ENCODE measurements at regions of chr6 and their contacts with region 1.

Region 1: DNA sequence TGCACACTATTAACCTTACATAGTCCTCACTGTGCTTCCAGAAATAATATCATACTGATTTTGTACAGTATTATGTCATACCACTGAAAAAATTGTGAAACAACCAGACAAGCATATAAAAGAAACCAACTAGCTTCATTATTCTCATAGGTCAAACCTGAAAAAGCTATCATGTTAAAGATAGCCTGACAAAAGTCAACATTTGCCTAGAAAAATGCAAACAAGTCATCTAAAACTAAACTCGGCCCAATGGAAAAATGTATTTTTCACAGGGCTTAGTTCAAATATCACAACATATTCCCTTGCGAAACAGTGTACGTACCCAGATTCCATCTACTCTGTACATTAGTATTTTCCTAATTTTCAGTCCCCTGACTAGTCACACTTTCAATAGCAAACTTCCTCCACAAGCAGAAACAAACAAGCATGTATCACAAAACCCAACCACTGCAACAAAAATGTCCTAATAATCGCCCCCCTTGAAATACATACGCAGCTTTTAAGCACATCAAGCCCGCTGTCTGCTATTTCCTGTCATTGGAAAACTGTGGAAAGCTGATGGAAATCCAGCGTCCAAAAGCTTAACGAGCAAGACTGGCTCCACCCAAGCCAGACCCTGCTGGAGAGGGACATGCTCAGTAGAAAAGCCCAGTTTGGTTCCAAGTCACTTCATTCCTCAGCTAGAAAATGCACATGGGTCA is 93.1 kb downstream of the EPB41L2 start:
- DNase-seq: peak; percentile 67
- ATAC-seq: peak; percentile 53
- H3K4me3 ChIP-seq: peak overlapping the region; percentile 37
- H3K27ac ChIP-seq: peak overlapping the region; percentile 84
- H3K4me1 ChIP-seq: peaks cover 24% of the 10 kb centered on the region
- H3K27me3 ChIP-seq: no peaks in the 10 kb centered on the region
- CTCF ChIP-seq: no peak
- POLR2A ChIP-seq: no peak
- RAD21 ChIP-seq: no peak

Region 2: DNA sequence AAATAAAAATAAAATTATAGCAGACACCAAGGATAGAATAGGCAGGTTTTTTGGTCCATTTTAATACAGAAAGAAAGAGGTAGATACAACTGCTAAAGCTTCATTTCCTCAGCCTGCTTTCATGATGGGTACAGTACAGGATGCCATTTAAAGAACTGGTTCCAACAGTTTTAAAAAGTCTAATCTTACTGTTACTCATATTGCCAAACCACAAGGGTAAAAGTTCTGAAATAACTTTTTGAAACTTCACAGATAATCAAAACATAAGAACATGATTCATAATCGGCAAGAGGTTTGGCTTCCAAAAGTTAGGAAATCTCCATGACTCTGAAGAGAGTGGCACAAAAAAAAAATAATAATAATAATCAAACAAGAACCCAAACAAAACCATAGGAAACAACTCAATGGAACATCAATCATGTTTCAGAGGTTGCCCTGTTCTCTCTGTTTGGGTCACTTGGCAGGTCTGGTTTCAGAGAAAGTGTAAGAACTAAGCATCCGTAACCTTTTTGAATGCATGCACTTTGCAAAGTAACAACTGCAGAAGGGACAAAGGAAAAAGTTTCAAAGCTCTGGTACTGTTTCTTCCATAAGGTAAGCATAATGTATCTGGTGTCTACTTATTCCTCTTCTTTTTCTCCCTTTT is 63.1 kb before region 1 on chr6:
- CTCF ChIA-PET with region 1: no interaction called
- POLR2A ChIA-PET with region 1: interaction called, 3 read pairs
- dilution Hi-C with region 1: no loop called
- in situ Hi-C with region 1: no loop called
- intact Hi-C with region 1: loop called (anchors 5 kb)
- DNase-seq: peak; percentile 88
- ATAC-seq: peak; percentile 90
- H3K4me3 ChIP-seq: no peak overlapping the region
- H3K27ac ChIP-seq: peak overlapping the region; percentile 41; the same call in 1 of the 2 replicates
- H3K4me1 ChIP-seq: peaks cover 13% of the 10 kb centered on the region
- H3K27me3 ChIP-seq: no peaks in the 10 kb centered on the region
- CTCF ChIP-seq: no peak
- POLR2A ChIP-seq: no peak
- RAD21 ChIP-seq: no peak